Transverse colon (tissue), 4 donors: ENCODE measurements at regions of chrX and their contacts with region 1.

Region 1: DNA sequence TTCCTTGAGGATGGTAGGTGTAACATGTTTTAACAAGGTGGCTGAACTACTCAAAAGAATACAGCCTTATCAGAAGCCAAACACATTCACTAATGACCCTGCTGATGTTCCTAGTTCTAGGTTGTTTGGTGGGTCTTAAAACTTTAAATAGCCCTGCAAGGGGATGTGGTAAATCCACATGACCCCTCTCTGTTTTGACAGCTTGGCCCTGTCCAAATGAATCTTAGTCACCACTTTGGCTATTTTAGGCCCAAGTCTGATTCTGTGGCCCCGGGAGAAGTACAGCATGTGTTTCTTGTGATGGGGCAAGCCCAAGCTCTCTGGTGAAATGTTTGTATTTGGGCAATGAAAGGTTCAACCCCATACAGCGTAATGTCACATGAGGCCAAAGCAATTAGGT is 54.5 kb upstream of the GPR34 start:
- DNase-seq: no peak
- H3K4me3 ChIP-seq: no peak overlapping the region
- H3K27ac ChIP-seq: no peak overlapping the region
- H3K4me1 ChIP-seq: no peaks in the 10 kb centered on the region
- H3K27me3 ChIP-seq: no peaks in the 10 kb centered on the region
- CTCF ChIP-seq: no peak
- EP300 ChIP-seq: no peak
- POLR2A ChIP-seq: no peak

Region 2: GRCh38 chrX:39633293-39633692 is 2001.0 kb before region 1 on chrX:
- in situ Hi-C with region 1: no loop called
- intact Hi-C with region 1: loop called (anchors 10 kb)
- DNase-seq: no peak
- H3K4me3 ChIP-seq: no peak overlapping the region
- H3K27ac ChIP-seq: no peak overlapping the region
- H3K4me1 ChIP-seq: no peaks in the 10 kb centered on the region
- H3K27me3 ChIP-seq: no peaks in the 10 kb centered on the region
- CTCF ChIP-seq: no peak
- EP300 ChIP-seq: no peak
- POLR2A ChIP-seq: no peak

Region 3: GRCh38 chrX:41705680-41706374 is 71.5 kb after region 1 on chrX:
- in situ Hi-C with region 1: no loop called
- intact Hi-C with region 1: no loop called
- DNase-seq: no peak
- H3K4me3 ChIP-seq: no peak overlapping the region
- H3K27ac ChIP-seq: peak overlapping the region in 2 of 4 donors; percentile 9 to 43
- H3K4me1 ChIP-seq: no peaks in the 10 kb centered on the region
- H3K27me3 ChIP-seq: no peaks in the 10 kb centered on the region
- CTCF ChIP-seq: no peak
- EP300 ChIP-seq: no peak
- POLR2A ChIP-seq: no peak